ENCODE measurements at regions of chr2 and their contacts with region 1.

Region 1: DNA sequence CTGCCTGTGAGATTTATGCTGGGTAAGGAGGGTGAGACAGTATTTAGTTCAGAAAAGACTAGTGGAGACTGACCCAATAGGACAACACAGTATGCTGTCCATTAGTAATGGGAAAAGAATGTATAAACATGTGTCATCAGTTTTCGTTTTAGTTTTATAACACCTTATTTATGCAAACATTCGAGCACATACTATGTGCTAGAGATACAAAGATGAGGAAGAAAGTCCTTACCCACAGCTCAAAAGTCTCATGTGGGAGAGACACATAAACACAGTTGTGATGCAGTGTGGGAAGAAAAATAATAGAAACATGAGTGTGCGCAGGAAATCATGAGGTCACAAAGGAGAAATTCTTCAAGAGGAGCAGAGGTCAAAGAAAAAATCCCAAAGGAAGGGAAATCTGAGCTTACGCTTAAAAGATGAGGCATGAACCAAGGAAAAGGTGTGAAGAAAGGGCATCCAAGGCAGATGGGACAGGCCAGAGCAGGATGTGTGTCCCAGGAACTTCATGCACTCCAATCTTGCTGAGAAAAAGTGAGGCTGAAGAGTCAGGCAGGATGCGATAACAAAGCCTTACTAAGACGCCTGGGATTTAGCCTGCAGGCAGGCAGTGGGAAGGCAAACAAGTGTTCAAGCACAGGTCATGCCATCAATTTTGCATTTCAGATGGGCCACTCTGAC is 8.0 kb downstream of the METTL21A start:
- DNase-seq: no peak

Region 2: DNA sequence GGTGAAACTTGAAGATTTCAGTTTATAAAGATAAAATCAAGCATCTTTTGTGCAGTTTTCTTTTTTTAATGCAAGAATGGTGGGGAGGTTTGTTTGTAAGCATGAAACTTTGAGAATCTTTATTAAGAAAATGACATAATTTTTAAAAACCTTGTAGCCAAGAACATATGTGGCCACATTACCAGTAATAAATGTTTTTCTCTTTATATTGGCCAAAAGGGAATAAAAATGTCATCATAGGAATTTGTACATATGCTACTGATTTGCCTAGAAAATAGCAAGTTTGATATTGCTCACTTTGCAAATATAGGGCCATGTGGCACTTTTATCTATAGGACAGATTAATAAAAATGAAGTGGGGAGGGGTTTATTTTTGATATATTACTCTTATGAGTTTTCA is 17.5 kb before region 1 on chr2:
- intact Hi-C with region 1: loop called in 1 of 2 experiments (anchors 1 kb)
- DNase-seq: no peak

Measured in posterior vena cava (tissue), 2 donors.